ENCODE measurements at regions of chr13 and their contacts with region 1.

Region 1: DNA sequence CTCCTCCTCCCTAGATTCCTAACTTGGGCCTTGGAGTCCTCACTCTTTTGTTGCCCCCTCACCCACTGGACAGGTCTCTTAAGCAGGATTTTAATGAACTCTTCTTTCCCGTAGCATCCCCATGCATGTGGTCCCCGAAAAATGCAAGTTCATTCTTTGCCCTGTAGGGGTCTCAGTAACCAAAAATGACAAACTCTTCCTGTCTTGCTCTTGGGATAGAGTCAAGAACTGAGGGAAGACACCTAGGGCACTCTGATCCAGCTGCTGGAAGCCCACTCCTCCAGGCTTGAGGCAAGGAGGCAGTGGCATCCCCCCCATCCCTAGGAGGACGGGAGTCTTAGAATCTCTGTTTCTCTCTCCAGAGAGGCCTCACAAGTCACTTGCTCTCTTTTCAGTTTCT is 987.0 kb downstream of the DIAPH3 start:
- DNase-seq: no peak
- H3K4me3 ChIP-seq: no peak overlapping the region
- H3K27ac ChIP-seq: no peak overlapping the region
- H3K4me1 ChIP-seq: peaks cover 0 to 1% (median under 1%) of the 10 kb centered on the region in 4 experiments; a peak in 1 of 7 replicates
- H3K27me3 ChIP-seq: no peaks in the 10 kb centered on the region
- CTCF ChIP-seq: peak in 1 of 3 experiments; percentile 44; a peak in 1 of 4 replicates
- EP300 ChIP-seq: no peak
- POLR2A ChIP-seq: no peak
- RAD21 ChIP-seq: peak in 1 of 2 experiments; percentile 44; a peak in 2 of 4 replicates

Region 2: GRCh38 chr13:59197397-59197796 is 20.6 kb after region 1 on chr13:
- CTCF ChIA-PET with region 1: interaction called, 24 read pairs
- POLR2A ChIA-PET with region 1: no interaction called
- DNase-seq: no peak
- H3K4me3 ChIP-seq: no peak overlapping the region
- H3K27ac ChIP-seq: no peak overlapping the region
- H3K4me1 ChIP-seq: no peaks in the 10 kb centered on the region
- H3K27me3 ChIP-seq: no peaks in the 10 kb centered on the region
- CTCF ChIP-seq: no peak
- EP300 ChIP-seq: no peak
- POLR2A ChIP-seq: no peak
- RAD21 ChIP-seq: no peak

Region 3: GRCh38 chr13:59409211-59409610 is 232.4 kb after region 1 on chr13:
- CTCF ChIA-PET with region 1: no interaction called
- POLR2A ChIA-PET with region 1: no interaction called
- DNase-seq: peak in 1 of 2 experiments; percentile 53
- H3K4me3 ChIP-seq: no peak overlapping the region; a peak in 1 of 8 replicates
- H3K27ac ChIP-seq: peak overlapping the region; percentile 78
- H3K4me1 ChIP-seq: peaks cover 0 to 23% (median 16%) of the 10 kb centered on the region in 4 experiments; a peak in 5 of 7 replicates
- H3K27me3 ChIP-seq: no peaks in the 10 kb centered on the region; a peak in 2 of 7 replicates
- CTCF ChIP-seq: no peak
- EP300 ChIP-seq: no peak
- POLR2A ChIP-seq: no peak
- RAD21 ChIP-seq: no peak